IMR-90 (cell line): ENCODE measurements at regions of chr1 and their contacts with region 1.

Region 1: GRCh38 chr1:183281553-183282091 is 95.6 kb downstream of the LAMC2 start:
- DNase-seq: peak; percentile 93
- ATAC-seq: peak; percentile 85
- H3K4me3 ChIP-seq: no peak overlapping the region
- H3K27ac ChIP-seq: no peak overlapping the region
- H3K4me1 ChIP-seq: peaks cover 26% of the 10 kb centered on the region
- H3K27me3 ChIP-seq: no peaks in the 10 kb centered on the region
- CTCF ChIP-seq: peak; percentile 94
- POLR2A ChIP-seq: no peak
- RAD21 ChIP-seq: peak; percentile 89

Region 2: DNA sequence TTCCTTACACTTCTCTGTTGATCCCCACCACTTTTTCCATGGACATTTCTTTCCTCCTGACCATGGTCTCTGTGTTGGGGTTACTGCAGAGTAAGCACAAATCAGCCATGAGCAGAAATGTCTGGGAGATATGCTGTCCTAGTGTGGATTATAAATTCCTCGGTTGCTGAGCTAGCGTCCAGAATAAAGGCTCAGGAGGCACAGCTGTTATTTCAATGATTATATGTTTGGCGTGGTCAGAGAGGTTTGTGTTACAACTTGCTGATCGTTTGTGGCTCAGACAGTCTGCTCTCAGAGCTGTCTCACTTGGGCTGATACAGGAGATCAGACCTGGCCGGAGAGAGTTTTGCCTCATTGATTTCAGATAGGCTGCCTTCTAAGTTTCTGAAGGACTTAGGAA is 133.0 kb before region 1 on chr1:
- CTCF ChIA-PET with region 1: no interaction called
- POLR2A ChIA-PET with region 1: no interaction called
- dilution Hi-C with region 1: no loop called
- in situ Hi-C with region 1: no loop called
- intact Hi-C with region 1: loop called (anchors 5 kb)
- DNase-seq: peak; percentile 64
- ATAC-seq: peak; percentile 71
- H3K4me3 ChIP-seq: no peak overlapping the region
- H3K27ac ChIP-seq: no peak overlapping the region
- H3K4me1 ChIP-seq: peaks cover 5% of the 10 kb centered on the region; the same call in 1 of the 2 replicates
- H3K27me3 ChIP-seq: no peaks in the 10 kb centered on the region
- CTCF ChIP-seq: no peak
- POLR2A ChIP-seq: no peak
- RAD21 ChIP-seq: no peak

Region 3: GRCh38 chr1:183218971-183219615 is 62.5 kb before region 1 on chr1:
- CTCF ChIA-PET with region 1: no interaction called
- POLR2A ChIA-PET with region 1: no interaction called
- dilution Hi-C with region 1: no loop called
- in situ Hi-C with region 1: no loop called
- intact Hi-C with region 1: no loop called
- DNase-seq: no peak
- ATAC-seq: no peak
- H3K4me3 ChIP-seq: no peak overlapping the region
- H3K27ac ChIP-seq: no peak overlapping the region
- H3K4me1 ChIP-seq: peaks cover 6% of the 10 kb centered on the region
- H3K27me3 ChIP-seq: peaks cover 6% of the 10 kb centered on the region; the same call in 1 of the 2 replicates
- CTCF ChIP-seq: no peak
- POLR2A ChIP-seq: no peak
- RAD21 ChIP-seq: no peak

Region 4: GRCh38 chr1:183263886-183264593 is 17.6 kb before region 1 on chr1:
- CTCF ChIA-PET with region 1: no interaction called
- POLR2A ChIA-PET with region 1: no interaction called
- dilution Hi-C with region 1: no loop called
- in situ Hi-C with region 1: no loop called
- intact Hi-C with region 1: no loop called
- DNase-seq: no peak
- ATAC-seq: no peak
- H3K4me3 ChIP-seq: no peak overlapping the region
- H3K27ac ChIP-seq: no peak overlapping the region
- H3K4me1 ChIP-seq: peaks cover 6% of the 10 kb centered on the region
- H3K27me3 ChIP-seq: no peaks in the 10 kb centered on the region
- CTCF ChIP-seq: no peak
- POLR2A ChIP-seq: no peak
- RAD21 ChIP-seq: no peak

Region 5: GRCh38 chr1:183318433-183318832 is 36.8 kb after region 1 on chr1:
- CTCF ChIA-PET with region 1: interaction called, 20 read pairs
- POLR2A ChIA-PET with region 1: no interaction called
- dilution Hi-C with region 1: no loop called
- in situ Hi-C with region 1: no loop called
- intact Hi-C with region 1: loop called (anchors 1 kb)
- DNase-seq: peak; percentile 95
- ATAC-seq: peak; percentile 97
- H3K4me3 ChIP-seq: no peak overlapping the region
- H3K27ac ChIP-seq: peak overlapping the region; percentile 20; the same call in 1 of the 2 replicates
- H3K4me1 ChIP-seq: peaks cover 10% of the 10 kb centered on the region
- H3K27me3 ChIP-seq: peaks cover 2% of the 10 kb centered on the region; the same call in 1 of the 2 replicates
- CTCF ChIP-seq: peak; percentile 81
- POLR2A ChIP-seq: no peak
- RAD21 ChIP-seq: peak; percentile 85

Region 6: DNA sequence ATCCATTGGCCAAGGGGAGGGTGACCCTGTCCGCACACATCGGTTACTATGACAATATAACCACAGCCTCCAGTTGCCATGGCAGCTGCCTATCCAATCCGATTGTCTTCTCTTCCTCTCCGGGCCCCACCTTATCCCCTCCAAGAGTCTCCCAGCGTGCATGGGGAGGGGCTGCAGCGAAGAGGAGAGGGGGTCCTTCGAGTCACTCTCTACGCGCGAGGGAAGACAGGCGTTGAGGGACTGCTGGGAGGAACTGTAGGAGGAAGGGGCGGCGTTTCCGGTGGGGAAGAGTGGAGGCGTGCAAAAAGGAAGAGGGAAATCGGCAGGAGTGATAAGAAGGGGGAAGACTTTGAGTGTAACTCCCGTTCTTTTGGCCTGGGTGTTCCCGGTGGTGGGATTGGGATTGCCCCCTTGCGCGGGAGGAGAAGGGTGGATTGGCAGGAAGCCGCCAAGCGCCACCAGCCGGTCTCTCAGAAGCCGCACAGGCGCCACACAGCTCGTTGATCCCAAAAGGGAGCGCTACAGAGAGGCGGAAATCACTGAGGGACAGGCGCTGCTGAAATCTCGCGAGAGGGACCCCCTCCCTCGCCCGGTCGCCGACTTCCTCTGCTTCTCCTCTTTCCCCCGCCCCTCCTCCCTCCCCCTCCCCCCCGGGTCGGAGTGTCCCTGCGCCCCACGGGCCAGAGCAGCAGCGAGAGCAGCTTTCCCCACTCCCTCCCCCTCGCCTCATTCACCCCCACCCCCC is 190.3 kb after region 1 on chr1:
- CTCF ChIA-PET with region 1: no interaction called
- POLR2A ChIA-PET with region 1: no interaction called
- dilution Hi-C with region 1: no loop called
- in situ Hi-C with region 1: no loop called
- intact Hi-C with region 1: loop called (anchors 5 kb)
- DNase-seq: peak; percentile 98
- ATAC-seq: peak; percentile 84
- H3K4me3 ChIP-seq: peak overlapping the region; percentile 99
- H3K27ac ChIP-seq: peak overlapping the region; percentile 98
- H3K4me1 ChIP-seq: peaks cover 2% of the 10 kb centered on the region; the same call in 1 of the 2 replicates
- H3K27me3 ChIP-seq: peaks cover under 1% of the 10 kb centered on the region; the same call in 1 of the 2 replicates
- CTCF ChIP-seq: no peak
- POLR2A ChIP-seq: no peak
- RAD21 ChIP-seq: no peak

Region 7: DNA sequence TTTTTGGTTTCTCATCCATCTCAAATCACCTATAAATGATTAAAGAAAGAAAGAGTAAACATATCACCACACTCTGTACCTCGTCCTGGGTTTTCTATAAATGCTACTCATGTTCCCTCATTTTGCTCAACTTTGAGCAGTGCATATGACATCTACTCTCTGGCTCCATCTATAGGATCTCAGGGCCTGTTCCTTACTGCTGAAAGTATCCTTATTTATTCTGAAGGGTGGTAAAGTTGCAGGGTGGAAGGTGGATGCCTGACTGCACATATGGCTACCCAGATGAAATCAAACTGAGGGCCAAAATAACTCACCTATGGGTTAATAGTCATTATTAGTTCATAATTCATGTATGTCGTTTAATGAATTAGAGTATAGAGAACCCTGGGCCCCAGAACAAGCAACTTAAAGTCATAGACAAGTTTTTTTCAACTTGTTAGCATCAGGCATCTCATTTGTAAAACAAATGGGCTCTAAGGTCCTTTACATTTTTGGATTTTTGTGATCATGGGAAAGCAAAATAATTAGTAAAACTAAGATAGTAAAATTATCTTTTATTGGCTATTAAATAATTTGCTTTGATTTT is 262.1 kb after region 1 on chr1:
- CTCF ChIA-PET with region 1: no interaction called
- POLR2A ChIA-PET with region 1: no interaction called
- dilution Hi-C with region 1: no loop called
- in situ Hi-C with region 1: no loop called
- intact Hi-C with region 1: loop called (anchors 1 kb)
- DNase-seq: peak; percentile 74
- ATAC-seq: peak; percentile 99
- H3K4me3 ChIP-seq: no peak overlapping the region
- H3K27ac ChIP-seq: no peak overlapping the region
- H3K4me1 ChIP-seq: no peaks in the 10 kb centered on the region; the same call in 1 of the 2 replicates
- H3K27me3 ChIP-seq: no peaks in the 10 kb centered on the region
- CTCF ChIP-seq: peak; percentile 79
- POLR2A ChIP-seq: no peak
- RAD21 ChIP-seq: peak; percentile 82

Region 8: GRCh38 chr1:183622884-183623785 is 341.5 kb after region 1 on chr1:
- CTCF ChIA-PET with region 1: no interaction called
- POLR2A ChIA-PET with region 1: no interaction called
- dilution Hi-C with region 1: no loop called
- in situ Hi-C with region 1: loop called (anchors 10 kb)
- intact Hi-C with region 1: loop called (anchors 1 kb)
- DNase-seq: peak; percentile 78
- ATAC-seq: peak; percentile 86
- H3K4me3 ChIP-seq: no peak overlapping the region
- H3K27ac ChIP-seq: no peak overlapping the region
- H3K4me1 ChIP-seq: peaks cover 3% of the 10 kb centered on the region
- H3K27me3 ChIP-seq: no peaks in the 10 kb centered on the region
- CTCF ChIP-seq: peak; percentile 73
- POLR2A ChIP-seq: no peak
- RAD21 ChIP-seq: peak; percentile 85

Region 9: DNA sequence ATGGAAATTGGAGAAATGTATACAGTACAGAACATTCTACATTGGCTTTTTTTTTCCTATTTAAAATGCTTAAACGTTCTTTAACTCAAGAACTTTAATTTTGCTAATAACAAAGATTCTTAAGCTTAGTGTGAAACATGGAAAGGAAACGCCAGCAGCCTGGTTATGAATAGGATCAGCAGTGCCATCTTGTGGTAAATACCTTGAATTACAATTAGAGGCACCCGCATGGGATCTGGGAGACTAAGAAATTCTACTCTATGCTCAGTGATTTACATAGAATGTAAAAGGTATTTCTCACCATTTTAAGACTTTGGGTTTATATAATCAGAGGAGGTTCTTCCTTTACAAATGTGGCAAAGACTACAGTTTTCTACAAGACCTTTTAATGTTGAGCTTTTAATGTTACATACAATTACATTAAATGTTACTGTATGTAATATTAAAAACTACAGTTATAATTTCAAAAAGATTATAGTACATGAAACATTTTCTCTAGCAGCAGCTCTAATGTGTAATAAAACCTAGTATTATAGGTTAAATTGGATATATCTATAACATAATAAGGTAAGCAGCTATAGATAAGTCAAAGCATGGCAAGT is 403.6 kb after region 1 on chr1:
- CTCF ChIA-PET with region 1: no interaction called
- POLR2A ChIA-PET with region 1: no interaction called
- dilution Hi-C with region 1: no loop called
- in situ Hi-C with region 1: no loop called
- intact Hi-C with region 1: loop called (anchors 5 kb)
- DNase-seq: peak; percentile 56
- ATAC-seq: peak; percentile 78; the same call in 1 of the 2 replicates
- H3K4me3 ChIP-seq: no peak overlapping the region
- H3K27ac ChIP-seq: no peak overlapping the region
- H3K4me1 ChIP-seq: no peaks in the 10 kb centered on the region
- H3K27me3 ChIP-seq: no peaks in the 10 kb centered on the region
- CTCF ChIP-seq: peak; percentile 70
- POLR2A ChIP-seq: no peak
- RAD21 ChIP-seq: peak; percentile 72